ENCODE measurements at regions of chr2 and their contacts with region 1.

Region 1: DNA sequence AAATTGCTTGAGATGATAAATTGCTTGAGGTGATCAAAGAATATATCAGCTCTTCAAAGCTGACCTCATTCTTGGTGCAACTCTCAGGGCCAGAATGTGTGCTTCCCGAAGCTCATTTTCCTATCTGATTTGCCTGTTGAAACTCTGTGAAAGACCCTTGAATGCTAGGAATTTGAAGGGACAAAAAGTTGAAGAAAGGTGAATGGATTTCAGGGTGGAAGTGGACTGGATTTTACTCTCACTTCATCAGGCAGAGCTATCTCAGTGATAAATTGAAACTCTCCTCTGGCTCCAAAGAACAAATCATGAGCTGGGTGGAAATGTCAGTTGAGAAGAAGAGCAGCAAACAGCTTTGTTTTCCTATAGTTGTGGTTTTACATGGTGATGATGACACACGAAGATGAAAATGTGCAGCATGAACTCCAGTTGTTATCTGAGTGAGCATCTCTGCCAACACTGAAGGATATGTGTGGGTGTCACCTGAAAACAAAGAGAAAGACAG is 34.4 kb downstream of the CD28 start:
- DNase-seq: peak in 7 of 14 experiments; percentile 31 to 89 (median 55)
- ATAC-seq: peak; percentile 86
- H3K4me3 ChIP-seq: peak overlapping the region; percentile 1
- H3K4me3 Mint-ChIP-seq: peak overlapping the region; percentile 70
- H3K27ac ChIP-seq: peak overlapping the region; percentile 66 to 79
- H3K27ac Mint-ChIP-seq: peak overlapping the region; percentile 87
- H3K4me1 ChIP-seq: peaks cover 76% of the 10 kb centered on the region
- H3K4me1 Mint-ChIP-seq: peaks cover 80% of the 10 kb centered on the region
- H3K27me3 ChIP-seq: no peaks in the 10 kb centered on the region
- H3K27me3 Mint-ChIP-seq: no peaks in the 10 kb centered on the region
- CTCF ChIP-seq: no peak

Region 2: GRCh38 chr2:202115479-202115971 is 1625.3 kb before region 1 on chr2:
- CTCF ChIA-PET with region 1: no interaction called
- POLR2A ChIA-PET with region 1: no interaction called
- intact Hi-C with region 1: no loop called
- DNase-seq: no peak
- ATAC-seq: no peak
- H3K4me3 ChIP-seq: no peak overlapping the region
- H3K4me3 Mint-ChIP-seq: no peak overlapping the region
- H3K27ac ChIP-seq: no peak overlapping the region
- H3K27ac Mint-ChIP-seq: no peak overlapping the region
- H3K4me1 ChIP-seq: no peaks in the 10 kb centered on the region
- H3K4me1 Mint-ChIP-seq: no peaks in the 10 kb centered on the region
- H3K27me3 ChIP-seq: peaks cover 2 to 3% of the 10 kb centered on the region in 2 experiments
- H3K27me3 Mint-ChIP-seq: peaks cover 30% of the 10 kb centered on the region
- CTCF ChIP-seq: no peak

Region 3: GRCh38 chr2:202643012-202643858 is 1097.6 kb before region 1 on chr2:
- CTCF ChIA-PET with region 1: no interaction called
- POLR2A ChIA-PET with region 1: interaction called, 4 read pairs
- intact Hi-C with region 1: loop called in 1 of 2 experiments (anchors 10 kb)
- DNase-seq: peak in 4 of 14 experiments; percentile 31 to 83 (median 62)
- ATAC-seq: peak; percentile 65
- H3K4me3 ChIP-seq: peak overlapping the region; percentile 43
- H3K4me3 Mint-ChIP-seq: peak overlapping the region; percentile 86
- H3K27ac ChIP-seq: peak overlapping the region; percentile 58 to 65
- H3K27ac Mint-ChIP-seq: no peak overlapping the region
- H3K4me1 ChIP-seq: peaks cover 57% of the 10 kb centered on the region
- H3K4me1 Mint-ChIP-seq: peaks cover 62% of the 10 kb centered on the region
- H3K27me3 ChIP-seq: no peaks in the 10 kb centered on the region
- H3K27me3 Mint-ChIP-seq: no peaks in the 10 kb centered on the region
- CTCF ChIP-seq: no peak

Region 4: DNA sequence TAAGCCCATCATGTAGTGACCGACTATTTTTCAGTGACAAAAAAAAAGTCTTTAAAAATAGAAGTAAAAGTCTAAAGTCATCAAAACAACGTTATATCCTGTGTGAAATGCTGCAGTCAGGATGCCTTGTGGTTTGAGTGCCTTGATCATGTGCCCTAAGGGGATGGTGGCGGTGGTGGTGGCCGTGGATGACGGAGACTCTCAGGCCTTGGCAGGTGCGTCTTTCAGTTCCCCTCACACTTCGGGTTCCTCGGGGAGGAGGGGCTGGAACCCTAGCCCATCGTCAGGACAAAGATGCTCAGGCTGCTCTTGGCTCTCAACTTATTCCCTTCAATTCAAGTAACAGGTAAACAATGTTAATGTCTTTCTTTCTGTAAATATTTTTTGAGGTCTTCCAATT is 34.4 kb before region 1 on chr2 and contains the start of gene CD28:
- CTCF ChIA-PET with region 1: interaction called, 19 read pairs
- POLR2A ChIA-PET with region 1: interaction called, 621 read pairs
- intact Hi-C with region 1: loop called (anchors 1 to 5 kb)
- DNase-seq: peak; percentile 78 to 97 (median 86)
- ATAC-seq: peak; percentile 76
- H3K4me3 ChIP-seq: peak within 1 kb of the TSS; percentile 81
- H3K4me3 Mint-ChIP-seq: peak within 1 kb of the TSS; percentile 90
- H3K27ac ChIP-seq: peak within 1 kb of the TSS; percentile 82 to 92
- H3K27ac Mint-ChIP-seq: peak within 1 kb of the TSS; percentile 92
- H3K4me1 ChIP-seq: peaks cover 22% of the 10 kb centered on the region
- H3K4me1 Mint-ChIP-seq: peaks cover 54% of the 10 kb centered on the region
- H3K27me3 ChIP-seq: no peaks in the 10 kb centered on the region
- H3K27me3 Mint-ChIP-seq: no peaks in the 10 kb centered on the region
- CTCF ChIP-seq: no peak
- total RNA-seq, gene CD28: 128 to 130 TPM

Region 5: GRCh38 chr2:203730076-203730729 is 10.6 kb before region 1 on chr2:
- CTCF ChIA-PET with region 1: interaction called, 10 read pairs
- POLR2A ChIA-PET with region 1: interaction called, 111 read pairs
- intact Hi-C with region 1: loop called in 1 of 2 experiments (anchors 1 kb)
- DNase-seq: no peak
- ATAC-seq: peak; percentile 62
- H3K4me3 ChIP-seq: no peak overlapping the region
- H3K4me3 Mint-ChIP-seq: peak overlapping the region; percentile 75
- H3K27ac ChIP-seq: peak overlapping the region; percentile 25 to 26
- H3K27ac Mint-ChIP-seq: peak overlapping the region; percentile 87
- H3K4me1 ChIP-seq: peaks cover 61% of the 10 kb centered on the region
- H3K4me1 Mint-ChIP-seq: peaks cover 95% of the 10 kb centered on the region
- H3K27me3 ChIP-seq: no peaks in the 10 kb centered on the region
- H3K27me3 Mint-ChIP-seq: no peaks in the 10 kb centered on the region
- CTCF ChIP-seq: no peak

Region 6: DNA sequence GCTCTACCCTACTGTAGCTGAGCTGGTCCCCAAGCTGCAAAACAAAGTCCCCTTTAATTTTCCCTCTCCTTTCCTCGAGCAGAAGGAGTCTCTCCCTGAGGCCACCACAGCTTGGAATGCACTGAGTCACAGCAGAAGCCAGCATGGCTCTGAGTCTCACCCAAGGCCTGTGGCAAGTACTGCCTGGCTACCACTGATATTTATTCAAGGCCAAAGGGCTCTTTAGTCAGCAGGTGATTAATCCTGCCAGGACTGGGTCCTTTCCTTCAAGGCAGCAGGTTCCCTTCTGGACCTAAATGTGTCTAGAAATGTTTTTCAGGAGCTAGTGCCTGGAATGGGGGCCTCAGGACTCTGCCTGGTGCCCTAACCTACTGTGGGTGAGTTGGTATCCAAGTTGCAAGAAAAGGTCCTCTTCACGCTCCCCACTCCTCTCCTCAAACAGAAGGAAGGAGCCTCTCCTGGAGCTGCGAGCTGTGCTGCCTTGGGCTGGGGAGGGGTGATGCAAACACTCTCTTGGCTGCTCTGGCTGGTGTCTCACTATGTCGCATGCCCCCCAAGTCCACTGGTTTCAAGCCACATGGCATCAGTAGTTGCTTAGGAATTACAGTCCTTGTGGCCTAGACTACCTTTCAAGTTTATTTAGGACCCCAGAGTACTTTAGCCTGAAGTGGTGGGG is 19.0 kb after region 1 on chr2:
- CTCF ChIA-PET with region 1: interaction called, 4 read pairs
- POLR2A ChIA-PET with region 1: interaction called, 22 read pairs
- intact Hi-C with region 1: loop called in 1 of 2 experiments (anchors 2 kb)
- DNase-seq: no peak
- ATAC-seq: no peak
- H3K4me3 ChIP-seq: no peak overlapping the region
- H3K4me3 Mint-ChIP-seq: no peak overlapping the region
- H3K27ac ChIP-seq: no peak overlapping the region
- H3K27ac Mint-ChIP-seq: peak overlapping the region; percentile 64
- H3K4me1 ChIP-seq: peaks cover 33% of the 10 kb centered on the region
- H3K4me1 Mint-ChIP-seq: peaks cover 81% of the 10 kb centered on the region
- H3K27me3 ChIP-seq: no peaks in the 10 kb centered on the region
- H3K27me3 Mint-ChIP-seq: no peaks in the 10 kb centered on the region
- CTCF ChIP-seq: no peak

Region 7: DNA sequence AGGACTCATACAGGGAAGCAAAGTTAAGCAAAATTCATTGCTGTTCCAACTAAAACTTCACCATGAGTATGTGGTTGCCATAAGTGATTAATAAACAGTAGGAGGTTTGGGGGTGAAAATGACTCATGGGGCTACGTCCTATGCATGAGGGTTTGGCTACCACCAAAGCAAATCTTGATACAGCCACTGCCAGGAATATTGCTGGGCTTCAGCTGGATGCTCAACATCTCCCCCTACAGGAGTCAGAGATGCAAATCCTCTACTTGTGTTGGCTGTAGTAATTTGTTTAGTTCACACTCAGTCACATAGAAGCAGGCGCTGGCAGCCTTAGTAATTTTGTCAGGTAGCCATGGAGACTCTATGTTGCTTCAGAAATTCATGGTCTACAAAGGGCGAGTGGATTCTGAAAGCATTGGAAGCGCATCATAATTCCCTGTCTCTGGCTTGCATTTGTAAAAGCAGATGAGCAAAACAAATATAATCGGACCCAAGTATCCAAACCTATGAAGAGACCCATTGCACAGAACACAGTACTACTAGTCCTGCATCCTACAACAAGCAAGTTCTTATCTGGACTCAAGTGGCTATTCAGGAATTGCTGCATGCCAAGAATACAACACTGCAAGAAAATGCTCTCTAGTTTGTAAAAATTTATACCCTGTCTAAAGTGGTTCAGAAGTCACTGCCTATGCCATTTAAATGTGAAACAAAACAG is 41.6 kb after region 1 on chr2:
- CTCF ChIA-PET with region 1: interaction called, 3 read pairs
- POLR2A ChIA-PET with region 1: interaction called, 20 read pairs
- intact Hi-C with region 1: loop called (anchors 5 kb)
- DNase-seq: peak; percentile 35 to 86 (median 52)
- ATAC-seq: peak; percentile 92
- H3K4me3 ChIP-seq: no peak overlapping the region
- H3K4me3 Mint-ChIP-seq: no peak overlapping the region
- H3K27ac ChIP-seq: no peak overlapping the region
- H3K27ac Mint-ChIP-seq: peak overlapping the region; percentile 62
- H3K4me1 ChIP-seq: peaks cover 20% of the 10 kb centered on the region
- H3K4me1 Mint-ChIP-seq: peaks cover 54% of the 10 kb centered on the region
- H3K27me3 ChIP-seq: no peaks in the 10 kb centered on the region
- H3K27me3 Mint-ChIP-seq: no peaks in the 10 kb centered on the region
- CTCF ChIP-seq: peak; percentile 79

Region 8: GRCh38 chr2:204871231-204871953 is 1130.6 kb after region 1 on chr2:
- CTCF ChIA-PET with region 1: no interaction called
- POLR2A ChIA-PET with region 1: no interaction called
- intact Hi-C with region 1: loop called in 1 of 2 experiments (anchors 5 kb)
- DNase-seq: peak in 3 of 14 experiments; percentile 60 to 71 (median 61)
- ATAC-seq: peak; percentile 59
- H3K4me3 ChIP-seq: no peak overlapping the region
- H3K4me3 Mint-ChIP-seq: no peak overlapping the region
- H3K27ac ChIP-seq: no peak overlapping the region
- H3K27ac Mint-ChIP-seq: no peak overlapping the region
- H3K4me1 ChIP-seq: peaks cover 3% of the 10 kb centered on the region
- H3K4me1 Mint-ChIP-seq: peaks cover 52% of the 10 kb centered on the region
- H3K27me3 ChIP-seq: no peaks in the 10 kb centered on the region
- H3K27me3 Mint-ChIP-seq: no peaks in the 10 kb centered on the region
- CTCF ChIP-seq: peak; percentile 84

Measured in CD4-positive, alpha-beta T cell (primary cell).